CD4-positive, alpha-beta T cell (primary cell): ENCODE measurements at regions of chr4 and their contacts with region 1.

Region 1: DNA sequence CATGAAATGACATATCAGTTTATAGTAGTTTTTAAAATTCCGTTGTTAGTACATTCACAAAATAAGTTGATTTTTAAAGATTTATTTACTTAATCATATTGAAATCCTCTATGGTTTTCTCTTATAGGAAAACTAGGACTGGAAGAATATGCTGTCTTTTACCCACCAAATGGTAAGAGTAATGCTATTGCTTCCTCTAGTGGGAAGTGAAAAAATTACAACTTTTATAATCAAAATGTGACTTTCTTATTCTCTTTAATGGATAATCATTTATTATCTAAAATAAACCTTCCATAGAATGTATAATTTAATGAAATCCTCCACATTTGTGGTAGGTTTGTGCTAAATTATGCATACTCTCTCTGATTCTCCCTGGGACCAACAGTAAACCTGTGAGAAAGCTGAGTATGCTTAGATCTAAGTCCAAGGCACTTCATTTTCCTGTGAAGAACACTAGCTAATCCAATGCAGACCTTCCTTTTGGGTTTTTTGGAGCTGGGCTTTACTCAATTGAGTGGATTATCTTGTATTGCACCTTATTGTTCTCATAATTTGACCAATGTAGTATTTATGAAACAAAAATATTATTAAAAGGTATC is 136.2 kb downstream of the TBC1D19 start:
- DNase-seq: peak in 2 of 14 experiments; percentile 3 to 14
- ATAC-seq: no peak
- H3K4me3 ChIP-seq: no peak overlapping the region
- H3K4me3 Mint-ChIP-seq: no peak overlapping the region
- H3K27ac ChIP-seq: no peak overlapping the region
- H3K27ac Mint-ChIP-seq: no peak overlapping the region
- H3K4me1 ChIP-seq: peaks cover 3% of the 10 kb centered on the region
- H3K4me1 Mint-ChIP-seq: peaks cover 12% of the 10 kb centered on the region
- H3K27me3 ChIP-seq: no peaks in the 10 kb centered on the region
- H3K27me3 Mint-ChIP-seq: no peaks in the 10 kb centered on the region
- CTCF ChIP-seq: peak; percentile 50

Region 2: DNA sequence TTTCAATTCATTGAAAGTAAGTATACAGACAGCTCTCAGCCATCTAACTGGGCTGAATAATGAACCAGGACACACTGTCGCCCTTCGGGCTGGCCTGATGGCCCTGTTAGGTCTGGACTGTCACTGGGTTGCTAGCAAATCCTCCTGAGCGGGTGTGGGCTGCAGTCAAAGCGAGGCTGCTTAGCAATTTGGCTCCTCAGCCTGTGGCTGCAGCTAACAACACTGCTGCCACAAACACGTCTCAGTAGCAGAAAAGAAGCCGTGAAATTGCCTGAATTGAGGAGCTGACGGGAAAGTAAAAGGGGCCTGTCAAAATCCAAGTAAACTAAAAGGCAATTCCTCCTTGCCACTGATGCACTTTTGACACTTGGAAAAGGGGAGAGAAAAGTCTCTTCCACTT is 733.2 kb before region 1 on chr4:
- CTCF ChIA-PET with region 1: no interaction called
- POLR2A ChIA-PET with region 1: no interaction called
- intact Hi-C with region 1: loop called in 1 of 2 experiments (anchors 5 kb)
- DNase-seq: no peak
- ATAC-seq: no peak
- H3K4me3 ChIP-seq: no peak overlapping the region
- H3K4me3 Mint-ChIP-seq: no peak overlapping the region
- H3K27ac ChIP-seq: no peak overlapping the region
- H3K27ac Mint-ChIP-seq: no peak overlapping the region
- H3K4me1 ChIP-seq: peaks cover 6% of the 10 kb centered on the region
- H3K4me1 Mint-ChIP-seq: peaks cover 8% of the 10 kb centered on the region
- H3K27me3 ChIP-seq: no peaks in the 10 kb centered on the region
- H3K27me3 Mint-ChIP-seq: no peaks in the 10 kb centered on the region
- CTCF ChIP-seq: no peak

Region 3: GRCh38 chr4:26330186-26330787 is 389.8 kb before region 1 on chr4:
- CTCF ChIA-PET with region 1: no interaction called
- POLR2A ChIA-PET with region 1: no interaction called
- intact Hi-C with region 1: loop called in 1 of 2 experiments (anchors 10 kb)
- DNase-seq: peak in 4 of 14 experiments; percentile 26 to 73 (median 70)
- ATAC-seq: peak; percentile 82
- H3K4me3 ChIP-seq: no peak overlapping the region
- H3K4me3 Mint-ChIP-seq: no peak overlapping the region
- H3K27ac ChIP-seq: no peak overlapping the region
- H3K27ac Mint-ChIP-seq: no peak overlapping the region
- H3K4me1 ChIP-seq: peaks cover 4% of the 10 kb centered on the region
- H3K4me1 Mint-ChIP-seq: peaks cover 56% of the 10 kb centered on the region
- H3K27me3 ChIP-seq: no peaks in the 10 kb centered on the region
- H3K27me3 Mint-ChIP-seq: no peaks in the 10 kb centered on the region
- CTCF ChIP-seq: peak; percentile 84

Region 4: GRCh38 chr4:26459054-26459755 is 260.8 kb before region 1 on chr4:
- CTCF ChIA-PET with region 1: no interaction called
- POLR2A ChIA-PET with region 1: interaction called, 3 read pairs
- intact Hi-C with region 1: loop called (anchors 2 to 5 kb)
- DNase-seq: peak in 4 of 14 experiments; percentile 6 to 60 (median 54)
- ATAC-seq: peak; percentile 50
- H3K4me3 ChIP-seq: no peak overlapping the region
- H3K4me3 Mint-ChIP-seq: peak overlapping the region; percentile 77
- H3K27ac ChIP-seq: no peak overlapping the region
- H3K27ac Mint-ChIP-seq: peak overlapping the region; percentile 64
- H3K4me1 ChIP-seq: no peaks in the 10 kb centered on the region
- H3K4me1 Mint-ChIP-seq: peaks cover 28% of the 10 kb centered on the region
- H3K27me3 ChIP-seq: no peaks in the 10 kb centered on the region
- H3K27me3 Mint-ChIP-seq: no peaks in the 10 kb centered on the region
- CTCF ChIP-seq: peak; percentile 58

Region 5: DNA sequence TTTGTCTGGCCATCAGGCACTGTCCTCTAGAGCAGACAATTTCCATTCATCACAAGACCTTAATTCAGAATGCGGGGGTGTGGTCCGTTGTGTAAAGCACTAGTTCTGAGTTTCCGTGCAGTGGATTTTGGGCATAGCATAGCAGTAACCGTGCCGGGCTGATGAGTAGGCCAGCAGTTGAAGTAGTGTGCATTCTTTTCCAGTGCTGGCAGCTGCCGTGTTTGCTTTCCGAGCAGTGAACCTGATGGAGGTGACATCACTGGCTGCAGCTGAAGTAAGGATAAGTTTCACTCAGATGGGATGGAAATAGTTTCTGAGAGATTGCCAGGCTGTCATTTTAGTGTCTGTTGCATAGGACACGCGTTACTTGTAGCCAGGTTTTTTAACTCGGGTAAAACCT is 33.6 kb after region 1 on chr4:
- CTCF ChIA-PET with region 1: no interaction called
- POLR2A ChIA-PET with region 1: no interaction called
- intact Hi-C with region 1: no loop called
- DNase-seq: no peak
- ATAC-seq: no peak
- H3K4me3 ChIP-seq: no peak overlapping the region
- H3K4me3 Mint-ChIP-seq: no peak overlapping the region
- H3K27ac ChIP-seq: no peak overlapping the region
- H3K27ac Mint-ChIP-seq: no peak overlapping the region
- H3K4me1 ChIP-seq: no peaks in the 10 kb centered on the region
- H3K4me1 Mint-ChIP-seq: no peaks in the 10 kb centered on the region
- H3K27me3 ChIP-seq: no peaks in the 10 kb centered on the region
- H3K27me3 Mint-ChIP-seq: no peaks in the 10 kb centered on the region
- CTCF ChIP-seq: no peak